CD4-positive, alpha-beta memory T cell (primary cell): ENCODE measurements at regions of chr7 and their contacts with region 1.

Region 1: GRCh38 chr7:101153969-101154692 is at the start of gene AP1S1:
- DNase-seq: peak; percentile 90 to 93 (median 91)
- H3K4me3 ChIP-seq: peak within 1 kb of the TSS; percentile 31 to 58
- H3K4me3 Mint-ChIP-seq: peak within 1 kb of the TSS; percentile 81 to 92 (median 86)
- H3K27ac ChIP-seq: no peak within 1 kb of the TSS
- H3K27ac Mint-ChIP-seq: peak within 1 kb of the TSS; percentile 73 to 97 (median 87)
- H3K4me1 ChIP-seq: peaks cover 13% of the 10 kb centered on the region
- H3K4me1 Mint-ChIP-seq: peaks cover 6 to 15% (median 12%) of the 10 kb centered on the region in 4 donors
- H3K27me3 ChIP-seq: no peaks in the 10 kb centered on the region
- H3K27me3 Mint-ChIP-seq: peaks cover 3 to 4% of the 10 kb centered on the region in 2 donors
- total RNA-seq, gene AP1S1: 8.8 to 10.8 TPM

Region 2: GRCh38 chr7:100799014-100799896 is 354.9 kb before region 1 on chr7:
- CTCF ChIA-PET with region 1: no interaction called
- POLR2A ChIA-PET with region 1: no interaction called
- intact Hi-C with region 1: no loop called
- DNase-seq: peak in 4 of 5 donors; percentile 28 to 43 (median 33)
- H3K4me3 ChIP-seq: no peak overlapping the region
- H3K4me3 Mint-ChIP-seq: no peak overlapping the region
- H3K27ac ChIP-seq: no peak overlapping the region
- H3K27ac Mint-ChIP-seq: peak overlapping the region in 3 of 7 donors; percentile 42 to 94 (median 55)
- H3K4me1 ChIP-seq: no peaks in the 10 kb centered on the region
- H3K4me1 Mint-ChIP-seq: peaks cover 0 to 8% (median 0%) of the 10 kb centered on the region in 4 donors
- H3K27me3 ChIP-seq: no peaks in the 10 kb centered on the region
- H3K27me3 Mint-ChIP-seq: peaks cover 9 to 12% of the 10 kb centered on the region in 2 donors

Region 3: GRCh38 chr7:101017064-101017777 is 136.9 kb before region 1 on chr7:
- CTCF ChIA-PET with region 1: no interaction called
- POLR2A ChIA-PET with region 1: no interaction called
- intact Hi-C with region 1: no loop called
- DNase-seq: peak; percentile 37 to 79 (median 56)
- H3K4me3 ChIP-seq: peak overlapping the region; percentile 81 to 86
- H3K4me3 Mint-ChIP-seq: peak overlapping the region; percentile 89 to 94 (median 92)
- H3K27ac ChIP-seq: peak overlapping the region; percentile 57
- H3K27ac Mint-ChIP-seq: peak overlapping the region; percentile 70 to 95 (median 94)
- H3K4me1 ChIP-seq: peaks cover 11% of the 10 kb centered on the region
- H3K4me1 Mint-ChIP-seq: peaks cover 8 to 37% (median 20%) of the 10 kb centered on the region in 4 donors
- H3K27me3 ChIP-seq: no peaks in the 10 kb centered on the region
- H3K27me3 Mint-ChIP-seq: peaks cover 2 to 5% of the 10 kb centered on the region in 2 donors

Region 4: DNA sequence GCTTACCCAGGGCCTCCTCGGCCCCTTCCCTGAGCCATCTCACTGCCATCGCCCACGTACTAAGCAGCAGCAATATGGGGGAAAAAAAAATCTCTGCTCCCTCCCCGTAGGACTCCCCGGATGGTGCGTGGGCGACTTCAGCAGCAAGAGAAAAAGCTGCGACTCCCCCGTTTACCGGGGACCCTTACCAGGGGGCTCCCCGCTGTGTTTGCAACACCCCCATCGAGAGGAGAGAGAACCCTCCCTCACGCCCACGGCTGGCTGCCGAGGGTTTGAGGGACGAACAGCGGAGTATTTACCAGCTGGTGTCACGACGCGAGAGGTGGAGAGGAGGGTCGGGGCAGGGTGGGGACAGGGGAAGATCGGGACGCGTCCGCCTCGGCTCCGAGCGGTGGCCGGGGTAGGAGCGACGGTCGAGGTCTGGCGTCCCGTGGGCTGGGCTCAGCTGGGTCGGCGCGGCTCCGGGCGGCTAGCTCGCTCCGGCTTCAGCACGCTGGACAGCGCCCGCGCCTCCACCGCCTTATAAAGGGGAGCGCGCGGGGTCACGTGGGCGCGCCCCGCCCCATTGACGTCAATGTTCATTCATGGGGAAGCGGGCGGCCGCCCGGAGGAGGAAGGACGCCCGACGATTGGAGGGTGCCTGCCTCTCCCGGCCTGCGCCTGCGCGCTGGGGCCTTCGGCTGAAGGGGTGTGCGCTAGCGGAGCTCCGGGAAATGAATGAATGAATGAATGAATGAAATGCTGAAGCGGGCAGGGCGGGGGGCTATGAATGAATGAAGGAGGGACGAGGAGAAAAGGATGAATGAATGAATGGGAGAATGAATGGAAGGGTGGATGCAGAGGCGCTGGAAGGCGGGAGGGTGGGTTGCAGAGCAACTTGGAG is 11.2 kb after region 1 on chr7 and contains the start of gene VGF:
- CTCF ChIA-PET with region 1: interaction called, 10 read pairs
- POLR2A ChIA-PET with region 1: interaction called, 4 read pairs
- intact Hi-C with region 1: loop called (anchors 1 kb)
- DNase-seq: peak; percentile 89 to 92 (median 90)
- H3K4me3 ChIP-seq: peak within 1 kb of the TSS in 1 of 2 donors; percentile 23
- H3K4me3 Mint-ChIP-seq: peak within 1 kb of the TSS; percentile 63 to 87 (median 78)
- H3K27ac ChIP-seq: no peak within 1 kb of the TSS
- H3K27ac Mint-ChIP-seq: peak within 1 kb of the TSS; percentile 74 to 93 (median 88)
- H3K4me1 ChIP-seq: peaks cover 53% of the 10 kb centered on the region
- H3K4me1 Mint-ChIP-seq: peaks cover 20 to 48% (median 35%) of the 10 kb centered on the region in 4 donors
- H3K27me3 ChIP-seq: peaks cover 62% of the 10 kb centered on the region
- H3K27me3 Mint-ChIP-seq: peaks cover 46 to 47% of the 10 kb centered on the region in 2 donors
- total RNA-seq, gene VGF: not detected

Region 5: DNA sequence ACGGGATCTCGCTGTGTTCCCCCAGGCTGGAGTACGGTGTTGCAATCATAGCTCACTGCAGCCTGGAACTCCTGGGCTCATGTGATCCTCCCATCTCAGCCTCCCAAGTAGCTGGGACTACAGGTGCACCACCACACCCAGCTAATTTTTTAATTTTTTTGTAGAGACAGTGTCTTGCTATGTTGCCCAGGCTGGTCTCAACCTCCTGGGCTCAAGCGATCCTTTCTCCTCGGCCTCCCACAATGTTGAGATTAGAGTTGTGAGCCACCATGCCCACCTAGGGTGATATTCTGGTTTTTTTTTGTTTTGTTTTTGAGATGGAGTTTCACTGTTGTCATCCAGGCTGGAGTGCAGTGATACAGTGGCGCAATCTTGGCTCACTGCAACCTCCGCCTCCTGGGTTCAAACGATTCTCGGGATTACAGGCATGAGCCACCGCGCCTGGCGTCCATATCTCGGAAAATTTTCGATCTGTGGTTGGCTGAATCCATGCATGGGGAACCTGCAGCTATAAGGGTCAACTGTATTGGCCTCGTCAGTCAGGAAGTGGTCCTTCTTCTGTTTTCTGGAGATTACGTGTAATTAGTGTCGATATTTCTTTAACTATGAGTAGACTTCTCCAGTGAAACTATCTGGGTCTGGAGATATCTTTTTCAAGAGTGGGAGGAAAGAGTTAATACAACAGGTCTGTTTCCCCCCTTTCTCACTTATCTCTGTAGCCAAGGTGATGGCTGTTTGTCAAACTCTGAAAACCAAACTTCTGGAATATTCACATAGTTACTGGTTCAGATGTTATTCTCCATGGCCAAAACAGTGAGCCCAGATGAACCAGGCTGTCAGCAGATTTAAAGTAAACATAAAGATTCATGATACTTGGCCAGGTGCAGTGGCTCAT is 111.7 kb after region 1 on chr7:
- CTCF ChIA-PET with region 1: no interaction called
- POLR2A ChIA-PET with region 1: no interaction called
- intact Hi-C with region 1: no loop called
- DNase-seq: no peak
- H3K4me3 ChIP-seq: no peak overlapping the region
- H3K4me3 Mint-ChIP-seq: no peak overlapping the region
- H3K27ac ChIP-seq: no peak overlapping the region
- H3K27ac Mint-ChIP-seq: no peak overlapping the region
- H3K4me1 ChIP-seq: no peaks in the 10 kb centered on the region
- H3K4me1 Mint-ChIP-seq: peaks cover 0 to 1% (median 0%) of the 10 kb centered on the region in 4 donors
- H3K27me3 ChIP-seq: no peaks in the 10 kb centered on the region
- H3K27me3 Mint-ChIP-seq: peaks cover 7% of the 10 kb centered on the region in 2 donors